ENCODE measurements at regions of chr9 and their contacts with region 1.

Region 1: DNA sequence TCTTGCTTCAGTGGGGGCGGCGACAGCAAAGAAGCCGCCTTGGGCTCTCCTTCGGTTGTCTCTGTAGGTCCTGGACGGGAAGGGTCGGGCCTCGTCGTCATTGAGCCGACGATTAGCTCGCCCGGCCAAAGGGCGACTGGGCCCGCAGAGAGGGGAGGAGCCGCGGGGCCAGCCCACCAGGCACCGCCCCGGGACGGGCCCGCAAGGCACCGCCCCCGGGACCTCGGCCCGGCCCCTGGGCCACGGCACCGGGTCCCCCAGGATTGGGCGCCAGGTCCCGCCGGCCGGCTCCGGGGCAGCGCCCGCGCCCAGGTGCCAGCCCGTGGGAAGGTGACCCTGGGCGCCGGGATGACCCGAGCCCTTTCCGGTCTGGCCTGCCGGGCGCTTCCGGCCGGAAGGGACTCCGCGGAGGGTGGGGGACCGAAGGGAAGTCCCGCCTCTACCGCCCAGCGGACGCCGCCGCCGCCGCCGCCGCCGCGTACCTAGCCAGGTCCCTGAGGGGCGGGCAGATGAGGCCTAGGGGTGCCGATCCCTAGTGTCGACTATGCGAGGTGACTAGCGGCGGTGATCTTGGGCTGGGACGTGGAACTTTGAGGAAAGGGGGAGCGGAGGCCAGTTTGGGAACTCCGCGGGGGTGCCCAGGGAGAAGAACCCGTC is at the starts of genes GBA2 and RGP1:
- DNase-seq: peak; percentile 84
- ATAC-seq: peak; percentile 84
- H3K4me3 Mint-ChIP-seq: peak within 1 kb of the TSS; percentile 93
- H3K27ac Mint-ChIP-seq: peak within 1 kb of the TSS; percentile 88
- H3K4me1 Mint-ChIP-seq: peaks cover 44% of the 10 kb centered on the region
- H3K27me3 Mint-ChIP-seq: no peaks in the 10 kb centered on the region
- CTCF ChIP-seq: no peak
- total RNA-seq, gene GBA2: 93.4 and 104 TPM in 2 replicates
- total RNA-seq, gene RGP1: 23.8 and 25.4 TPM in 2 replicates

Region 2: GRCh38 chr9:35738186-35738585 is 10.8 kb before region 1 on chr9:
- CTCF ChIA-PET with region 1: interaction called, 51 read pairs
- POLR2A ChIA-PET with region 1: interaction called, 67 read pairs
- intact Hi-C with region 1: loop called (anchors 1 kb)
- DNase-seq: no peak
- ATAC-seq: no peak
- H3K4me3 Mint-ChIP-seq: no peak overlapping the region
- H3K27ac Mint-ChIP-seq: no peak overlapping the region
- H3K4me1 Mint-ChIP-seq: peaks cover 6% of the 10 kb centered on the region
- H3K27me3 Mint-ChIP-seq: no peaks in the 10 kb centered on the region
- CTCF ChIP-seq: no peak

Measured in activated B cell treated with CpG ODN at 0.5 μM for 24 hours (primary cell).